Common myeloid progenitor, CD34-positive (primary cell): ENCODE measurements at regions of chr3 and their contacts with region 1.

Region 1: GRCh38 chr3:114310695-114311094 is 16.9 kb downstream of the TIGIT start:
- DNase-seq: no peak
- H3K4me3 ChIP-seq: no peak overlapping the region
- H3K27ac ChIP-seq: no peak overlapping the region
- H3K4me1 ChIP-seq: no peaks in the 10 kb centered on the region
- H3K27me3 ChIP-seq: no peaks in the 10 kb centered on the region

Region 2: DNA sequence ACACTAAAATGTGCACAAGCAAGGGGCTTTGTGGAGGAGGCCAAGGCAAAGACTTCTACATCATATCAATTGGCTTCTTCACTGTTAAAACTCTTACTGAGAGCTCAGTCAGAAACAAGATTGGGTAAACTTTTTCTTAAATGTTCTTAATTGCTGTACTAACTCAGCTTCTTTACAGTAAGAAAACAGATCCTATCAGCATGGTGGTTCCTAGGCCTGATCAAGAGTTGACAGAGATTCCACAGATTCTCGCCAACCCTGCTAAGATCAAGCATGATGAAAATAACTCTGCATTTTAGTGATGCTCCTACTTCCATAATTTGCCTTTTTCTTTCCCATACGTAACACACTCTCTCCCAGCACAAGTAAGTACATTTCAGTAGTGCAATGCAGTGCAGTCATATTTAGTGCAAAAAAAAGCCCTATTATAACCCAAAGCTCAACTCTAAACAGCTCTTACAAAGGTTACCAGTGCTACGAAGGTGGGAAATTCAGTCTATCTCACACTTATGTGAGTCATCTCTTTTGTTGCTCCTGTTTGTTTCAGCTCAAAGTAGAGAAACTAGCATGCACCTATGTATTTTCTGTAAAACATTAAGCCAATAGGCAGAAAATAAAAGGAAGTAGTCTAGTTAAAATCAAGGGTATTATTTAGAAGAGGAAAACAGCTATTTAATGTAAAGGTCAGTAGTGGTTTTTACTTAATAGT is 13.0 kb after region 1 on chr3:
- CTCF ChIA-PET with region 1: interaction called, 10 read pairs
- POLR2A ChIA-PET with region 1: no interaction called
- DNase-seq: no peak
- H3K4me3 ChIP-seq: no peak overlapping the region
- H3K27ac ChIP-seq: no peak overlapping the region
- H3K4me1 ChIP-seq: no peaks in the 10 kb centered on the region
- H3K27me3 ChIP-seq: no peaks in the 10 kb centered on the region

Region 3: DNA sequence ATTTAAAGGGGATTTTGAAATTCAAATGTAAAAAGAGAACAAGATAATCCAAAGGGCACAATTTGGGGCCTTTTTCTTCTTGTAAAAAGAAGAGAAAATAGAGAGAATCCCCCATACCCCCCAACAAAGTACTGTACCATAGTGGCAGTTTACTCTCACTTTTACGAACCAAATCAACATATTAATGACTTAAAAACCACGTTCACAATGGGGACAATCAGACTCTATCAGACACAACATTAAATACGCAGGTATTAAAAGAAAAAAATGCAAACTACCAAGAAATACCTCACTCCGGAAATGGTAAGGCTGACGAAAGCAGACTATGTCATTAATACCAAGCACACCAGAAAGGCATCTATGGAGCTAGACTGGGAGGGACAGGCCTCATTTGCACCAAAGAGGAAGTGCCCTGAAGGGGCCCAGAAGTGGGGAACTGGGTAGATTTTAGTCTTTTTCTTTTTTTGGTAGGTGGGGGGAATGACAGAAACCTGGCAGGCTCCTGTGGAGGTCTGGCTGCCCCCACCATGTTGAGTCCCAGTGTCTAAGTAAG is 117.4 kb after region 1 on chr3:
- CTCF ChIA-PET with region 1: no interaction called
- POLR2A ChIA-PET with region 1: no interaction called
- DNase-seq: peak in 2 of 3 donors; percentile 21 to 33
- H3K4me3 ChIP-seq: no peak overlapping the region
- H3K27ac ChIP-seq: no peak overlapping the region
- H3K4me1 ChIP-seq: peaks cover 0 to 4% (median 1%) of the 10 kb centered on the region in 4 experiments
- H3K27me3 ChIP-seq: no peaks in the 10 kb centered on the region

Region 4: GRCh38 chr3:114484919-114485318 is 174.2 kb after region 1 on chr3:
- CTCF ChIA-PET with region 1: no interaction called
- POLR2A ChIA-PET with region 1: no interaction called
- DNase-seq: no peak
- H3K4me3 ChIP-seq: no peak overlapping the region
- H3K27ac ChIP-seq: no peak overlapping the region
- H3K4me1 ChIP-seq: peaks cover 0 to 10% (median 6%) of the 10 kb centered on the region in 4 experiments
- H3K27me3 ChIP-seq: no peaks in the 10 kb centered on the region